ENCODE measurements at regions of chr12 and their contacts with region 1.

Region 1: GRCh38 chr12:46268590-46269558 is at the start of gene SLC38A1:
- DNase-seq: no peak
- ATAC-seq: peak; percentile 75
- H3K4me3 ChIP-seq: peak within 1 kb of the TSS; percentile 82
- H3K27ac ChIP-seq: peak within 1 kb of the TSS; percentile 95
- H3K4me1 ChIP-seq: peaks cover 8% of the 10 kb centered on the region; the same call in 1 of the 2 replicates
- H3K27me3 ChIP-seq: no peaks in the 10 kb centered on the region
- CTCF ChIP-seq: peak in 1 of 3 experiments; percentile 11; a peak in 2 of 6 replicates
- EP300 ChIP-seq: no peak; a peak in 1 of 4 replicates
- POLR2A ChIP-seq: peak; percentile 97
- RAD21 ChIP-seq: peak; percentile 31; the same call in 1 of the 2 replicates
- polyA plus RNA-seq, gene SLC38A1: 38.1 to 64.0 TPM

Region 2: DNA sequence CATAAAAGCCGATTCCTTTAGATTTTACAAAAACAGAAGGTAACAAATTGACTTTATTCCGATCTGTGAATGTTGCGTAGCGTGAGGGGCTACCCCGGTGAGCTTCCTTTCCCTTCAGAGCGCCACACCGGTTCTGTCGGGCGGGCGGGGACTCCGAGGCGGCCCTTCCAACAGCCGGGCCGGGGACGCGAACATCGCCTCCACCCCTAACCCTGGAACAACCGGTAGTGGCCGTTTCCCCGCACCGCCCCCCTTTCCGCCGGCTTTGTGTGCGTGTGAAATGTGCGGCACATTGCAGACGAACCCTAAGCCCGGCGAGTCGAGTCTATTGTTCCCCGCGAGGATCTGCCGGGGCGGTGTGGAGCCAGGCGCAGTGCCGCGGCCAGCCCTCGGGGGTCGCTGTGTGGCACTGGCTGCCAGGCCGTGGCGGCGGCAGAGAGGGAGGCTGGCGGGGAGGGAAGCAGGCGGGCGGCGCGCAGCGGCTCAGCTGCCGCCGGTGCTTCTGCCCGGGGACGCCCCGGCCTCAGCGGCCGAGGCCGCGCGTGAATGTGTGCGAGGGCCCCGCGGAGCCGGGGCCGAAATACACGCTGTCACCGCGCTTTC is 540.1 kb before region 1 on chr12:
- CTCF ChIA-PET with region 1: no interaction called
- POLR2A ChIA-PET with region 1: no interaction called
- RAD21 ChIA-PET with region 1: no interaction called
- SMC1A ChIA-PET with region 1: no interaction called
- in situ Hi-C with region 1: no loop called
- intact Hi-C with region 1: loop called (anchors 5 kb)
- DNase-seq: peak; percentile 87
- ATAC-seq: peak; percentile 73
- H3K4me3 ChIP-seq: peak overlapping the region; percentile 93
- H3K27ac ChIP-seq: peak overlapping the region; percentile 95
- H3K4me1 ChIP-seq: no peaks in the 10 kb centered on the region
- H3K27me3 ChIP-seq: no peaks in the 10 kb centered on the region
- CTCF ChIP-seq: peak; percentile 94 to 98 (median 96)
- EP300 ChIP-seq: peak; percentile 36 to 45; a peak in 1 of 4 replicates
- POLR2A ChIP-seq: peak; percentile 96
- RAD21 ChIP-seq: peak; percentile 64

Region 3: DNA sequence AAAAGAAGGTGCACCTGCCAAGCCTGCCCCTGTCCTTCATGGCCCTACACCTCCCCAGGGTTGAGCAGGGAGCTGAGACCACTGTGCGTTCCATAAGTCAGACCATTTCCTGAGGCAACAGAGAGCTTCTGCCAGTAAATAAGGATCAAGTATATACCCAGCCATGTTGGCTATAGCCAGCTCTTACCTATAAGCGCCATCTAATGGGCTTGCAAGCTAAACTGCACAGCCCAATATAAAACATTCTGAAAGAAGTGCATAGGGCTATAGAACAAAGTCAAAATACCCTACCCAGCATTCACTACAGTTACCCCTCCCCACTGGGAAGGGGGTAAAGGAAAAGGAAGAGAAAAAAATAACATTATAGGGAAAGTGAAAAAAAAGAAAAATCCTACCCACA is 219.2 kb before region 1 on chr12:
- CTCF ChIA-PET with region 1: no interaction called
- POLR2A ChIA-PET with region 1: no interaction called
- RAD21 ChIA-PET with region 1: no interaction called
- SMC1A ChIA-PET with region 1: no interaction called
- in situ Hi-C with region 1: no loop called
- intact Hi-C with region 1: no loop called
- DNase-seq: no peak
- ATAC-seq: no peak
- H3K4me3 ChIP-seq: no peak overlapping the region
- H3K27ac ChIP-seq: no peak overlapping the region
- H3K4me1 ChIP-seq: no peaks in the 10 kb centered on the region
- H3K27me3 ChIP-seq: no peaks in the 10 kb centered on the region
- CTCF ChIP-seq: no peak
- EP300 ChIP-seq: no peak
- POLR2A ChIP-seq: no peak
- RAD21 ChIP-seq: no peak

Region 4: DNA sequence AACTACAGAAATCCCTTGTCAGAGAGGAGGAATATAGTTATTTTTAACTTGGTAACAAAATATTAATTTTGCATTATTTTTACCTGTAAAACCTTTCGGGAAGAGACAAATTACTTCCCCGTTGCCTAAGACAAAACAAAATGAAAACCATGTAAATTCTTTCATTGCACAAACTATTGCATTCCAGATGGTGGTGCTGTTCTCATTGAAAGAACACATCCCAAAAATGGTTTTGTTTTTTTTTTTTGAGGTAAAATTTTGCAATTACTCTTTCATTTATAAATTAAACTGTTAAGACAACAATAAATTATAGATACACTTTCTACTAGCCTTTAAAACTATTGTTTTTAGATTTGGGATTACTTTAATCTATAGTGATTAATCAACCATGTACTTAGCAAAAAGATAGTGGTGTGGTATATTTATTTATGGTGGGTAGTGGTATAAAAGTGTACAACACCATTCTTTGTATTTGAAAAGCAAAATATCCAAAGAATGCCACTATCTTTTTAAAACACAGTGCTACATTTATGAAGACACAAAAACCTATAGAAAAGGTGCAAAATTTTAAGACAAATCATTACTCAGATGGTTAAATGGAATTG is 115.5 kb before region 1 on chr12:
- CTCF ChIA-PET with region 1: interaction called, 8 read pairs
- POLR2A ChIA-PET with region 1: interaction called, 7 read pairs
- RAD21 ChIA-PET with region 1: interaction called, 8 read pairs
- SMC1A ChIA-PET with region 1: interaction called, 14 read pairs
- in situ Hi-C with region 1: no loop called
- intact Hi-C with region 1: loop called (anchors 2 kb)
- DNase-seq: no peak
- ATAC-seq: peak; percentile 56
- H3K4me3 ChIP-seq: no peak overlapping the region
- H3K27ac ChIP-seq: no peak overlapping the region
- H3K4me1 ChIP-seq: no peaks in the 10 kb centered on the region
- H3K27me3 ChIP-seq: no peaks in the 10 kb centered on the region
- CTCF ChIP-seq: peak; percentile 59 to 76 (median 64); a peak in 5 of 6 replicates
- EP300 ChIP-seq: no peak
- POLR2A ChIP-seq: no peak
- RAD21 ChIP-seq: peak; percentile 93

Region 5: DNA sequence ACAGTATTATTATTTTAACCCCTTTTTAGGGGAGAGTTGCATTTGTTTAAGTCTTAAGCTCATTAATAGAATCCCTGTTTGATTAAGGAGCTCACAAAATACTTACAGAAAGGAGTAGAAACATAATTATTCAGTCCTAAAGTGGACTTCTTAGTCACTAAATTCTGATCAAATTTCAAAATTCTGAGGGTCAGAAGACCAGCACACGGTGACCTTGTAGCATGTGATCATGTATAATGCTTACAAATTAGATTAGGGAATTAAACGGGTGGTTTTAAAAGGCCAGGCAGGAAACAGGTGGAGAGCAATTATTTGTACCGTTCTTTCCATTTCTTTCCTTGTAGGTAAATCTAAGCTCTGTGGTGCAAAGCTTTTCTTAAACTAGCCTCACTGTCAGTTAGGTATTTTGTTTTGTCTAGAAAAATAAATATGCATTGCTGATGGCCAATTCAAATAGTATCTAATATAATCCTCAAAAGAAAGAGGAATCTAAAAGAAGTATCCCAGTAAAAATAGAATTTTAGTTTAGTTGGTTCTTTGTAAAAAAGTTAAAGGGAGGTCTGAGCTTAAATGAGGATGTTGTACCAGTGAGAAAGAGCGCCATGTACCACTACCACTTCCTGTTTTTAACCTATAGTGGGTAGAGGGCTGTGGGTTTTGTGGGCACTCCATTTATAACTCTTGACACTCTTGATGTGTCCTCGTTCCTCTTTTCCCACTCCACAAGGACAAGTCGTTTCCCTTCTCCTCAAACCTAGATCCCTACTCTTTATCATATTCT is 51.1 kb before region 1 on chr12:
- CTCF ChIA-PET with region 1: interaction called, 14 read pairs
- POLR2A ChIA-PET with region 1: interaction called, 30 read pairs
- RAD21 ChIA-PET with region 1: interaction called, 60 read pairs
- SMC1A ChIA-PET with region 1: interaction called, 95 read pairs
- in situ Hi-C with region 1: no loop called
- intact Hi-C with region 1: loop called (anchors 2 kb)
- DNase-seq: peak; percentile 90
- ATAC-seq: peak; percentile 71
- H3K4me3 ChIP-seq: peak overlapping the region; percentile 44; the same call in 1 of the 2 replicates
- H3K27ac ChIP-seq: peak overlapping the region; percentile 87
- H3K4me1 ChIP-seq: peaks cover 62% of the 10 kb centered on the region
- H3K27me3 ChIP-seq: no peaks in the 10 kb centered on the region
- CTCF ChIP-seq: no peak
- EP300 ChIP-seq: peak; percentile 95 to 97
- POLR2A ChIP-seq: no peak
- RAD21 ChIP-seq: no peak

Region 6: DNA sequence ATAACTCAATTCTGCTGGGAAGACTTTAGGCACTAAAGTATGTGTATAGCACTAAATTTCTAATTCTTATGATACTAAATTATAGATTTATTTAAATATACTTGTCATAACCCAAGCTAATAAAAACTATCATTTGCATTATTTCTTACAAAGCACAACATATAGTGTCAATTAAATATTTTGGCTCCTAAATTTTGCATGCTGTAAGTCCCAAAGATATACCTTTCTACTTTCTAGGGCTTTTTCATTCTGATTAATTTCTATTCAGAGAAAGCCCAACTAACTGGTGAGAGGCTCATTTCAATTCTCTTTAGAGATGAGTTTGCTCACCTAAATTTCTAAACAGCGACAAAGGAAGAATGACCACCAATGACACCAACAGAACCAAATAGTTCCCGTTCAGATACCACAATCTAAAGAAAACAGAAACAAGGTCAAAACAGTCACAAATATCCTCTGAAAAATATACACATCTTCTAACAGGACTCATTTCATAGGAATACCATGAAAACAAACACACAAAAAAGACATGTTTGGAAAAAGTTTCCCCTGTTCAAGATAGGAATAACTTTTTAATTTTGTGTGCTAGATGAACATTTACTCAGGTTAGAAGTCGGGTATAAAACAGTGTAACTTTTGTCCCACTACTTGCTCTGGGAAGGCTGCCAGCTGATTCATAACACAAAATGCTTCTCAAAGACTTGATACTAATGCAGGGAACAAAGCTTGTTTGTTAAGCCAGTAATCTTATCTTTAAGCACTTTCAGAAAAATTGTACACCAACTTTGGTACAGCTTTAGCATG is 96.1 kb after region 1 on chr12:
- CTCF ChIA-PET with region 1: interaction called, 6 read pairs
- POLR2A ChIA-PET with region 1: interaction called, 3 read pairs
- RAD21 ChIA-PET with region 1: interaction called, 14 read pairs
- SMC1A ChIA-PET with region 1: interaction called, 6 read pairs
- in situ Hi-C with region 1: loop called (anchors 5 kb)
- intact Hi-C with region 1: no loop called
- DNase-seq: no peak
- ATAC-seq: peak; percentile 37
- H3K4me3 ChIP-seq: peak overlapping the region; percentile 34; the same call in 1 of the 2 replicates
- H3K27ac ChIP-seq: peak overlapping the region; percentile 22
- H3K4me1 ChIP-seq: peaks cover 37% of the 10 kb centered on the region
- H3K27me3 ChIP-seq: no peaks in the 10 kb centered on the region
- CTCF ChIP-seq: no peak
- EP300 ChIP-seq: 0 out of 4 replicates have a peak, but pooled peaks of 1 of the 2 experiments have one; percentile 42
- POLR2A ChIP-seq: no peak
- RAD21 ChIP-seq: no peak

Region 7: GRCh38 chr12:46402451-46402850 is 133.6 kb after region 1 on chr12:
- CTCF ChIA-PET with region 1: no interaction called
- POLR2A ChIA-PET with region 1: no interaction called
- RAD21 ChIA-PET with region 1: no interaction called
- SMC1A ChIA-PET with region 1: no interaction called
- in situ Hi-C with region 1: no loop called
- intact Hi-C with region 1: no loop called
- DNase-seq: no peak
- ATAC-seq: no peak
- H3K4me3 ChIP-seq: no peak overlapping the region
- H3K27ac ChIP-seq: no peak overlapping the region
- H3K4me1 ChIP-seq: peaks cover 15% of the 10 kb centered on the region
- H3K27me3 ChIP-seq: no peaks in the 10 kb centered on the region
- CTCF ChIP-seq: no peak
- EP300 ChIP-seq: no peak
- POLR2A ChIP-seq: no peak
- RAD21 ChIP-seq: no peak

Region 8: DNA sequence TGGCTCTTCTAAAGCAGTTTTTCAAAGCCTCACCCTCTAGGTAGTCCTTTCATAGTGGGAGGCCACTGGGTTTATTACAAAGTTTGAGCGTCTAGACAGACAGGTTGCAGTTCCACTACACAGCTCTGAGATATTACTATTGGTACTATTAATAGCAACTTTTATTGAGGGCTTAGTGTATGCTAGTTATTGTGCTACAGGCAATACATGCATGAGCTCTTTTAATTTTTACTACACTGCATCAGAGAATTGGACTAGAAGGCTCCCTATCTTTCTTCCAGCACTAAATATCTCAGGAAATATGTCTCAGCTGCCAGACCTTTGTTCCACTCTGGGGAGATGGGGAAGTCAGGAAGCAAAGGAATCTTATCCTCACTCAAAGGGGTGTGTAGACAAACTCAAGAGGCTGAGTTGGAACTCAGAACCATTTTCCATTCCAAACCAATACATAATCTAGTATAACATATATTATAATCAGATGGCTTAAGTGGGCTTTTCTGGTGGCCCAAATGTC is 265.5 kb after region 1 on chr12:
- CTCF ChIA-PET with region 1: no interaction called
- POLR2A ChIA-PET with region 1: no interaction called
- RAD21 ChIA-PET with region 1: no interaction called
- SMC1A ChIA-PET with region 1: no interaction called
- in situ Hi-C with region 1: no loop called
- intact Hi-C with region 1: no loop called
- DNase-seq: no peak
- ATAC-seq: no peak
- H3K4me3 ChIP-seq: no peak overlapping the region
- H3K27ac ChIP-seq: no peak overlapping the region
- H3K4me1 ChIP-seq: peaks cover 12% of the 10 kb centered on the region
- H3K27me3 ChIP-seq: no peaks in the 10 kb centered on the region
- CTCF ChIP-seq: no peak
- EP300 ChIP-seq: no peak
- POLR2A ChIP-seq: no peak
- RAD21 ChIP-seq: no peak

Region 9: DNA sequence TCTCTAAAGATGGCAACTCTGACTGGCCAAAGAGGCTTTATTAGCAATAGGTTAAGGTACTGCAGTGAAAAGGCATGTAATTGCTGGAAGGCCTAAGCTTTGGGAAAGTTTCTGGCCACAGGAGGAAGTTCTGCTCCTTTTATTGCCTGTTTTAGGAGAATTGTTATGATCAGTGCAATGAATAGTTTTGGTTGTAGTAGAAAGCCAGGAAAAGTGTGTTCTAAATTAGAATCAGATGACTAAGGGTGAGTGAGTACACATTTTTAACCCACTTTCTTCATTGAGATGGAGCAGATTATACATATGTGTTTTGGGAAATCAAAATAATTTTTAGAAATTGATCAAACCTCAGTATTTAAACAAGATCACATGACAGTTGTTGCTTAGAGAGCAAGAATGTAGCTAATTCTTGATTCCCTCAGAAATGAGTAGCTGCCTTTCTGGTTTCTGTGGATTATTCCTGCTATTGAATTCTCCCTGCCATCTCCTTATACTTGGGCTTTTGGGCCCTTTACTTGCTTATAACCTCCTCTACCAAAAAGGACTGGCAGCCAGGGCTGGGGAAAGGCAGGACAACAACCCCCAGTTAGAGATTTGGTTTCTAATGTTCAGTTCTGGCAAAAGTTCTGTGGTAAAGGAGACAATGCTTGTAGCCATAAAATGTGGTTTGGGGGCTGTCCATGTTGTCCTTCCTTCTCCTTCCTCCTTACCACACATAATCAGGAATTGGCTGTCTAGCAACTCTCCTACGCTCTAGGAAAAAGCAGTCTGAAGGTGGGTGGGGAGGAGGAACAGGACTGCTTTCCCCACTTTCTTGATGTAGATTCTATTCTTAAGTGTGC is 339.8 kb after region 1 on chr12:
- CTCF ChIA-PET with region 1: no interaction called
- POLR2A ChIA-PET with region 1: no interaction called
- RAD21 ChIA-PET with region 1: no interaction called
- SMC1A ChIA-PET with region 1: no interaction called
- in situ Hi-C with region 1: no loop called
- intact Hi-C with region 1: no loop called
- DNase-seq: no peak
- ATAC-seq: no peak; the same call in 2 of the 3 replicates
- H3K4me3 ChIP-seq: no peak overlapping the region
- H3K27ac ChIP-seq: no peak overlapping the region
- H3K4me1 ChIP-seq: peaks cover 6% of the 10 kb centered on the region
- H3K27me3 ChIP-seq: no peaks in the 10 kb centered on the region
- CTCF ChIP-seq: no peak
- EP300 ChIP-seq: no peak
- POLR2A ChIP-seq: no peak
- RAD21 ChIP-seq: no peak

Region 10: GRCh38 chr12:47705566-47706425 is 1436.9 kb after region 1 on chr12 and contains the start of gene RPAP3:
- CTCF ChIA-PET with region 1: no interaction called
- POLR2A ChIA-PET with region 1: no interaction called
- RAD21 ChIA-PET with region 1: no interaction called
- SMC1A ChIA-PET with region 1: no interaction called
- in situ Hi-C with region 1: no loop called
- intact Hi-C with region 1: loop called (anchors 10 kb)
- DNase-seq: peak; percentile 65
- ATAC-seq: peak; percentile 94
- H3K4me3 ChIP-seq: peak within 1 kb of the TSS; percentile 84
- H3K27ac ChIP-seq: peak within 1 kb of the TSS; percentile 85
- H3K4me1 ChIP-seq: peaks cover 32% of the 10 kb centered on the region
- H3K27me3 ChIP-seq: no peaks in the 10 kb centered on the region
- CTCF ChIP-seq: peak; percentile 38 to 60 (median 48); a peak in 4 of 6 replicates
- EP300 ChIP-seq: no peak
- POLR2A ChIP-seq: peak; percentile 98
- RAD21 ChIP-seq: no peak
- polyA plus RNA-seq, gene RPAP3: 14.1 to 24.5 TPM

Measured in GM12878 (cell line).